ENCODE measurements at regions of chr5 and their contacts with region 1.

Region 1: DNA sequence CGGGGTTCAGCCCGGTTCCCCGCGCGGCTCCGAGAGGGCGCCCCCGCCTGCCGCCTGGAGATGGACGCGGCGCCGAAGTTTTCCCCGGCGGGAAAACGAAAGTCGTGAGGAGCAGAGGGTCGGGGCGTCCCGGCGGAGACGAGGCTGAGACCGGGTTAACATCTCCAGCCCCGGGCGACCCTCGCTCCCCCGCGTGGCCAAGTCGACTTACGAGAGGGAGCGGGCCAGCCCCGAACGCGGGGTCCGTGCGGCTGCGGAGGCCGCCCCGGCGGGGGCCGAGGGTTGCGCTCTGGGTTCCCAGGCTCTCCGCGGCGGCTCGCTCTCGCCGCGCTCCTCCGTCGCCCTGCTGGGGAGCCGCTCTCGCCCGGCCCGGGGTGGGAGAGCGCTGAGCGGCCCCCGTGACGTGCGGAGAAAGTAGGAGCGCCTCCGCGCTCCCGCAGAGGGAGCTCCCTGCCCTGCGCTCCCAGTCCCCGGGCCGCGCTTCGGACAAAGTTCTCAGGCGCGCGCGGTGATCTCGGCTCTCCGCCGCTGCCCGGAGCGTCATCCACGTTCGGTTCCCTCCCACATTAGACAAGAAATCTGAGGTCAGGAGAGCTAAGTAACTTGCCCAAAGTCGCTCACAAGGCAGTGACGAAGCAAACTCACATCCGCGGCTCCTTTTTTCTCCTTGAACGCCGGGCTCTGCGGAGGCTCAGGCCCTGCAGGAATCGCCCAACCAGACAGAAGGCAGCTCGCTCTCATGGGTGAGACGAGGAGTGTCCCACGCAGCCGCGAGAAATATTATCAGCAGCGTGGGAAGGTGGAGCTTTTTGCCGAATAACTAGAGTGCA is 1.2 kb upstream of the GCNT4 start:
- DNase-seq: peak; percentile 67
- H3K4me3 Mint-ChIP-seq: peak overlapping the region; percentile 86
- H3K27ac Mint-ChIP-seq: peak overlapping the region; percentile 92
- H3K4me1 Mint-ChIP-seq: peaks cover 73% of the 10 kb centered on the region
- H3K27me3 Mint-ChIP-seq: no peaks in the 10 kb centered on the region

Region 2: DNA sequence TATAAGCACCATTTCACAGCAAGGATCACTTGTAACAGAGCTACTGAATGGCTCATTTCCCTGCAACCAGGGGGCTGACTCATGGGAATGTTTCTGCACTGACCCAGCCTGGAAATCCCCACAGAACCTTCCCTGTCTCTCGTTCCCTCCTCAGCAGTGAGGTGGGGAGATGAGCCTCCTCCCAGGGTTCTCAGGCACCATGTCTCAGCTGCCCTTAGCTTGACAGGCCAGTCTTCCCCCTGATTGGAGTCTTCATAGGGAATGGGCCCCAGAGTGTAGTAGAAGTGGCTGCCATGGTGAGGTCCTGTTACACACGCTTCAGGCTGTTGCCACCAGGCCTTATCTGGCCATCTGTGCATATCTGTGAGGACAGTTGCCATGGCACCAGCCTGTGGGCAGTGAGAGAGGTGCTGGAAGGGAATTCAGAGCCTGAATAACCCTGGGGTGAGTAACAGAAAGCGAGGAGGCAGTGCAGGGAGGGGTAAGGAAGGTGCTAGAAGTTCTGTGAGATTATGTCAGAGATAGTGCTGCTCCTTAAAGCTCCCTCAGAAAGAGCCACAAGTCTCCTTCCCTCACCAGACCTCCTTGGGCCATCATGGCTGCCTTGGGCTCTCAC is 737.3 kb before region 1 on chr5:
- CTCF ChIA-PET with region 1: no interaction called
- intact Hi-C with region 1: no loop called
- DNase-seq: peak; percentile 52
- H3K4me3 Mint-ChIP-seq: no peak overlapping the region
- H3K27ac Mint-ChIP-seq: no peak overlapping the region
- H3K4me1 Mint-ChIP-seq: peaks cover 9% of the 10 kb centered on the region
- H3K27me3 Mint-ChIP-seq: peaks cover 18% of the 10 kb centered on the region

Region 3: DNA sequence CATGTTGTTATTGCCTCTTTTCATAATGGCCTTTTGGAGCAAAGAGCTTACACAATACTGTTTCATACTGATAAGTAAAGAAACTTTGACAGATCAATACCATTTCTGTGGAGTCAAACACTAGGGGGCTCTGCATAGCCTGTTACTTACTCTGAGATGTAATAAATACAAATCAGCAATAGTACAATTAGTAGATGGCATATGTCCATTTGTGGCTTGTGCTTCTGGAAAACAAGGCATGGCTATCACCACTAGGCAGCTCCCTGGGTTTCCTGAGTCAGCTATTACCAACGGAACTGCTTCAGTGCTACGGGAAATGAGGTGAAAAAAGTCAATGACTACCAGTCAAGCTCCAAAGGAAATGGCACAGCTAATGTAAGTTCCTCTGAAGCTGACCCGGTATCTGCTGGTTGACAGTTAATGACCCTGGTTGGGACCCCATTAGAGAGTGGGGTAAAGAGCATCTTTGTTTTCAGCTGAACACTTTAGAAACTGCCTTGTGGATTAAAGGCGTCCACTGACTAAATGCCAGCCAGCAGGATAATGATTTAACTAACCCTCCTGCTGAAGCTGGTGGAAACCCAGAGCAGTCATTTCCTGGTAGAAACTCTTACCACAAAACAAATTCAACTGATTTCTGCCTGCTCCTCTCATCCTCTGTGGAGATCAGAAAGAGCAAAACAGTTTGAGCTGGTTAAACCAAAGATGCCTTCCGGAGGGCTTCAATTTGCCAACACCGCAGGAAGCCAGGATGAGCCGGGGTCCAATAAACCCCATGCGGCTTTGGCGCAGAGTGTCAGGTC is 118.4 kb before region 1 on chr5:
- CTCF ChIA-PET with region 1: interaction called, 14 read pairs
- intact Hi-C with region 1: loop called (anchors 1 kb)
- DNase-seq: peak; percentile 60
- H3K4me3 Mint-ChIP-seq: peak overlapping the region; percentile 61
- H3K27ac Mint-ChIP-seq: peak overlapping the region; percentile 80
- H3K4me1 Mint-ChIP-seq: peaks cover 31% of the 10 kb centered on the region
- H3K27me3 Mint-ChIP-seq: no peaks in the 10 kb centered on the region

Region 4: GRCh38 chr5:75091597-75091996 is 38.1 kb after region 1 on chr5:
- CTCF ChIA-PET with region 1: interaction called, 4 read pairs
- intact Hi-C with region 1: loop called (anchors 2 kb)
- DNase-seq: no peak
- H3K4me3 Mint-ChIP-seq: no peak overlapping the region
- H3K27ac Mint-ChIP-seq: no peak overlapping the region
- H3K4me1 Mint-ChIP-seq: peaks cover 34% of the 10 kb centered on the region
- H3K27me3 Mint-ChIP-seq: no peaks in the 10 kb centered on the region

Region 5: DNA sequence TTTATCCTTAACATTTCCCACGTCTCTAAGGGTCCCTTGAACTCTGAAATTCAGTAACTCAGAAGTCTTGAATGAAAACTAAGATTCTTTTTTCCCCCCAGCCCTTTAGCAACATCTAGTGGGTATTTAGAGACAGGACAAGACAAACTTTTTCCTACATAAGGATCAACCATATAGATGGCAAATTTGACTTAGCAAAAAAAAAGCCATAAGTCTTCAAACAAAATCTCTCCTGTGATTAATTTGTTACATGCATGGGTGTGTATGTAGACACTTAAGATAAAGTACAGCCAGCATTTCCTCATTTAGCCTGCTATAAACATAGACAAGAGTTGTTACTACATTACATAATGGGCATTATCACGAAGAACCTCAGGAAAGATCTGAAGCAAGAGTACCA is 212.2 kb after region 1 on chr5:
- CTCF ChIA-PET with region 1: interaction called, 11 read pairs
- intact Hi-C with region 1: loop called (anchors 1 kb)
- DNase-seq: no peak
- H3K4me3 Mint-ChIP-seq: no peak overlapping the region
- H3K27ac Mint-ChIP-seq: no peak overlapping the region
- H3K4me1 Mint-ChIP-seq: no peaks in the 10 kb centered on the region
- H3K27me3 Mint-ChIP-seq: no peaks in the 10 kb centered on the region

Region 6: DNA sequence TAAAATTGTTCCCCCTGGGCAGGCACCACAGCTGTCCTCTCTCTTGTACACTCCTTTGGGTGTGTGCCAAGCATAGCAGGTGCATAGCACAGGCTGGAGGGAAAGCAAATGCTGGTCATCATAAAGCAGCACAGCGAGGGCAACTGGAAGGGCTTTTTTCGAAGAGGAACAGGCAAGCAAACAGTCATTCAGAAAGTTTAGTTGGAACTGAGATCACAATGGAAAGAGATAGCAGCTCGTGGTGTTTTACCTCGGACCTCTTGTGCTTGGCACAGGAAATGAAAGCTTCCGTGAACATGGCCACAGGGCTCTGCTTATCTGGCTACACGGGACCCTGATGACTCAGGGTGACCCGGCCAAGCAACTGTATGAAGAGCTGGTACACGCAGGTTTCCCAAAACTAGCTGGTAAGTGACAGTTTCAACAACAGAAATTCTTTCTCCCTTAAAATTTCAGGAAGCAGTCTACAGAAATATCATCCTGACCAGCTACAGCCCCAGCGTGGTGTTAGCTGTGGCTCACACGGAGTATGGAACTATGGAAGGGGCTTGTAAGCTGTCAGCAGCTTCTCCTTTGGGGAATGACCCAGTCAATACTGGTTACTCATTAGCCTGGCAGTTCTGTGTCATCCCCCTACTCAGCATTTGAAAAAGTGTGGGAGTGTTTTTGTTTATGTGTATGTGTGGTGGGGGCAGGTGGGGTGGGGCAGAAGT is 615.6 kb after region 1 on chr5:
- CTCF ChIA-PET with region 1: interaction called, 3 read pairs
- intact Hi-C with region 1: loop called (anchors 5 kb)
- DNase-seq: peak; percentile 82
- H3K4me3 Mint-ChIP-seq: peak overlapping the region; percentile 49
- H3K27ac Mint-ChIP-seq: peak overlapping the region; percentile 70
- H3K4me1 Mint-ChIP-seq: peaks cover 30% of the 10 kb centered on the region
- H3K27me3 Mint-ChIP-seq: no peaks in the 10 kb centered on the region

Region 7: GRCh38 chr5:76473661-76474060 is 1420.1 kb after region 1 on chr5:
- CTCF ChIA-PET with region 1: no interaction called
- intact Hi-C with region 1: loop called (anchors 10 kb)
- DNase-seq: peak; percentile 90
- H3K4me3 Mint-ChIP-seq: peak overlapping the region; percentile 38
- H3K27ac Mint-ChIP-seq: peak overlapping the region; percentile 92
- H3K4me1 Mint-ChIP-seq: peaks cover 76% of the 10 kb centered on the region
- H3K27me3 Mint-ChIP-seq: no peaks in the 10 kb centered on the region